Pancreas (tissue), 10 donors: ENCODE measurements at regions of chr6 and their contacts with region 1.

Region 1: DNA sequence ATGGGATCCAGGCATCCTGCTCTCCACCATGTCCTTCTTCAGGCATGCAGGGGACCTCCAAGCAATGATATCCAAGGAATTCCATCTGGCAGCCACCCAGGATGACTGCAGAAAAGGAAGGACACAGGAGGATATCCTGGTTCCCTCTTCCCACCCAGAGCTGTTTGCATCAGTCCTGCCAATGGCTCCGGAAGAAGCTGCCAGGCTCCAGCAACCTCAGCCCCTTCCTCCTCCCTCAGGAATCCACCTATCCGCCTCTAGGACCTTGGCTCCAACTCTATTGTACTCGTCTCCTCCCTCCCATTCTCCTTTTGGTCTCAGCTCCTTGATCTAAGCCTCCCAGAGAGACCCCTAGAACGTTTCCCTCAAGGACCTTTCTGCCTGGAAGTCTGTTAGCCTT is 733 bp upstream of the PSORS1C2 start:
- DNase-seq: no peak
- ATAC-seq: no peak
- H3K4me3 ChIP-seq: no peak overlapping the region
- H3K27ac ChIP-seq: no peak overlapping the region
- H3K4me1 ChIP-seq: no peaks in the 10 kb centered on the region
- H3K27me3 ChIP-seq: no peaks in the 10 kb centered on the region
- CTCF ChIP-seq: no peak

Region 2: DNA sequence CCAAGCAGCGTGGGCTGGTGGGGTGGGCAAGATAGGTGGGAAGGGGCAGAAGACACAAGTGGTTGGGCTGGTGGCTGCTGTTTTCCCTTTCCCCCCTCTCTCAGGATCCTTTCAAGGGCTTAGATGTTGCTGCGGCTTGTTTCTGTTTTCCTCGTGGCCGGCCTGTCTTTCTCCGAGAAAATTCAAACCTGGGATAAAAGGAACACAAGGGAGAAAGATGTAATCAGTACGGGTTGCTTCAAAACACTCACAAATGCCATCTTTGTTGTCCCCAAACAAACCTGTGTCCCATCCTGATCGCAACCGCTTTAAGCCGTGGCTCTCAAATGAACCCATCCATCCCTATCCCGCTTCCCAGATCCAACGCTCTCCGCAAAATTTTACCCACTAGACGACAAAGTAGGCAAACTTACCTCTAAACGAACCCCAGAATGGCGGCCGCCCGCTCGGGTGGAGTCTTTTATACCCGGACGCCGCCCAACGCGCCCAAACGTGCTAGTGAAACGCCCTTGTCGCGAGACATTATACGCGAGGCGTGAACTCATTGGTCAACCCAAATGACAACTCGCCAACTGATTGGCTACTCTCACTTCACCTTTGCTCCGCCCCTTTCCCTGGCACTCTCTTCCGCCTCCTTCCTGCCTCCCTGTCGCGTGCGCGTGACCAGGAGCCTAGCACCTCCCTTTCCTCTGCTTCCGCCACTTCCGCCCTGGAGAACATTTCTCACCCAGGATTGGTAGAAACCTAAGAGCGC is 522.6 kb before region 1 on chr6 and contains the start of gene PPP1R10:
- intact Hi-C with region 1: no loop called
- DNase-seq: peak; percentile 97 to 100 (median 99)
- ATAC-seq: peak; percentile 71 to 90 (median 81)
- H3K4me3 ChIP-seq: peak within 1 kb of the TSS; percentile 76 to 93 (median 84)
- H3K27ac ChIP-seq: peak within 1 kb of the TSS; percentile 92 to 98 (median 98)
- H3K4me1 ChIP-seq: peaks cover 19 to 36% (median 23%) of the 10 kb centered on the region in 3 donors
- H3K27me3 ChIP-seq: no peaks in the 10 kb centered on the region
- CTCF ChIP-seq: no peak
- total RNA-seq, gene PPP1R10: 34.8 to 57.9 (median 43.0) TPM

Region 3: DNA sequence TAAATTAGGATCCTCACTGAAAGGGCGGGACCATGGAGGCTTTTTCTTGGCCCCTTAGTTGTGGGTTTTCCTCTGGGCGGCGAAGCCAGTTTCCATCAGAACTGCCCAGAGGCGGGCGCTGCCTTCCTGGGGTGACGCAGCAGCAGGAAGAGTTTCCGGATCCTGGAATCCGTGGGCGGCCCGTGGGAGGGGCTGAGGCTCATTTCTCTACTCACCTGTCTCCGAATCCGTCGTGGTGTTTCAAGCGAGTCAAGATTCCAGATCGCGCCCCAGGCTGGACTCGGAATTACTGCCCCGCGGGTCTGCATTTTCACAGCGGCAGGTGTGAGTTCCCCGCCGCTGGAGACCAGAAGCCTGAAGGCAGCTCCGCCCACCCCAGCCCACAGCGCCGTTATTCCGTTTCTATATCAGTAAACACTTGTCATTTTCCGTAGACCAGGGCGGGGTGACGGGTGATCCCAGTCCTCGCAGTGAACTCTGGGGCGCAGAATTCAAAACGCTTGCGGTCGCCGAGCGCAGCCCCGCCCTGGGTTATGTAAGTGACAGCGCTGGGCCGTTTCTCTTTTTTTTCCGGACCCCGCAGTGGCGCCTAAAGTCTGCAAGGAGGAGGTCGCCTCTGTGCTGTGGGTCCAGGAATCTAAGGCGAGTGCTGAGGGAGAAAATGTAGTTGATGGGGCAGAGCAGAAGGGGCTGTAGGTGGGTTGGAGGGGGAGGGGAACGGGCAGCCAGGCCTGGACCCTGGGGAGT is 58.1 kb after region 1 on chr6:
- intact Hi-C with region 1: loop called in 2 of 3 experiments (anchors 2 kb)
- DNase-seq: peak; percentile 89 to 95 (median 92)
- ATAC-seq: peak; percentile 87 to 93 (median 88)
- H3K4me3 ChIP-seq: peak overlapping the region; percentile 23 to 59 (median 45)
- H3K27ac ChIP-seq: peak overlapping the region; percentile 76 to 98 (median 97)
- H3K4me1 ChIP-seq: peaks cover 0 to 15% (median 6%) of the 10 kb centered on the region in 3 donors
- H3K27me3 ChIP-seq: no peaks in the 10 kb centered on the region
- CTCF ChIP-seq: no peak

Region 4: GRCh38 chr6:31216208-31216898 is 76.8 kb after region 1 on chr6:
- intact Hi-C with region 1: no loop called
- DNase-seq: no peak
- ATAC-seq: peak in 3 of 4 donors; percentile 55 to 82 (median 78)
- H3K4me3 ChIP-seq: no peak overlapping the region
- H3K27ac ChIP-seq: peak overlapping the region in 2 of 4 donors; percentile 53 to 66
- H3K4me1 ChIP-seq: peaks cover 0 to 4% (median 0%) of the 10 kb centered on the region in 3 donors
- H3K27me3 ChIP-seq: no peaks in the 10 kb centered on the region
- CTCF ChIP-seq: no peak

Region 5: DNA sequence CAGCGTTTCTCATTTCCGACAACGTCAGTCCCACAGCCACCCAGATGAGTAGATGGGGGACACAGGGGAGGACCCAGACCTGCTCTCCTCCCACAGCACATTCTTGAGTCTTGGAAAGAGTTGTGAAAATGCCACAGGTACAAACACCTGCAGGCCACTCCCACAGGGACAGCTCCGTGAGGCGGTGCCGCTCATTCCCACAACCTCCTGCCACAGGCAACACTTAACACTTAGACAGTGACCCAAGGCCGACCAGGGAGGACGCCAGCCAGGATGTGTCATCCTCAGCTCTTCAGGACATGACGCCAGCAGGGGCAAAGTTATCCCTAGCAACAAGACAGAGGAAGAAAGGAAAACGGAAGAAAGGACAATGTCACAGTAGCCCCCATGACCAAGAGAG is 240.3 kb after region 1 on chr6:
- intact Hi-C with region 1: loop called in 1 of 3 experiments (anchors 5 kb)
- DNase-seq: no peak
- ATAC-seq: no peak
- H3K4me3 ChIP-seq: no peak overlapping the region
- H3K27ac ChIP-seq: no peak overlapping the region
- H3K4me1 ChIP-seq: no peaks in the 10 kb centered on the region
- H3K27me3 ChIP-seq: peaks cover 0 to 7% (median 0%) of the 10 kb centered on the region in 4 donors
- CTCF ChIP-seq: no peak